ENCODE measurements at regions of chr22 and their contacts with region 1.

Region 1: GRCh38 chr22:43385770-43386641 is 25.8 kb upstream of the MPPED1 start:
- DNase-seq: peak in 1 of 2 donors; percentile 76
- H3K4me3 ChIP-seq: no peak overlapping the region
- H3K27ac ChIP-seq: no peak overlapping the region
- H3K4me1 ChIP-seq: no peaks in the 10 kb centered on the region
- H3K27me3 ChIP-seq: no peaks in the 10 kb centered on the region
- CTCF ChIP-seq: peak; percentile 72 to 92 (median 74)

Region 2: DNA sequence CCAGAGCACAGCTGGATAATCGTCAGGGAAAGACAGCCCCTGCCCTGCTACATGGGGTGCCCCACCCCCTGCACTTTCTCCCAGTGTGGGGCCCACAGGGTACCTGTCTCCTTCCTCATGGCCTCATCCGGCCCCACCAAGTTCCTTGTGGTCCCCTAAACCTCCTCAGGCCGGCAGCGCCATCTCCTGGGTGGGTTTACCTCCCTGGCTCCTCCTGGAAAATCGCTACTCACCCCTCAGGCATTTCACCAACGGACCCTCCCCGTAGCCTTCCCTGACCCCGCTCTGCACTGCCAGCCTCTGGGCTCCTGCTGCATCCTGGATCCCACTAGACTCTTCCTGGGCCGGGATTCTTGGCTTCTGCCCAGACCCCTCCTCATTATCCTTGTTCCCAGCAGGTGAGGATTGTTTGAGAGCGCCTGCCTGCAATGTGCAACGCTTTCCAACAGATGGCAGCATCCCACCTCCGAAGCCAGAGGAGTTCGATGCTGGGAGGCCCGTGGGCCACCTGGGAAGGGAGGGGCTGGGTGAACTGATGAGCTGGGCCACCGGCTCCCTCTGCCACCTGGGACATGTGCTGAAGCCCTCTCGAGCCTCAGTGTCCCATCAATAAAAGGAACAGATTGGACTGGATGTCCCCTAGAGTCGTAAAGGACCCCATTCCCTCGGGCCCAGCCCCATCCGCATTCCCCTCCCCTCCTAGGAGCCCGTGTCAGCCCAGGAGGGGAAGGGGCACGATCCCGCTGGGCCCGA is 154.9 kb before region 1 on chr22:
- intact Hi-C with region 1: loop called (anchors 1 kb)
- DNase-seq: no peak
- H3K4me3 ChIP-seq: no peak overlapping the region
- H3K27ac ChIP-seq: no peak overlapping the region
- H3K4me1 ChIP-seq: no peaks in the 10 kb centered on the region
- H3K27me3 ChIP-seq: peaks cover 5% of the 10 kb centered on the region
- CTCF ChIP-seq: peak; percentile 50 to 84 (median 83)

Region 3: DNA sequence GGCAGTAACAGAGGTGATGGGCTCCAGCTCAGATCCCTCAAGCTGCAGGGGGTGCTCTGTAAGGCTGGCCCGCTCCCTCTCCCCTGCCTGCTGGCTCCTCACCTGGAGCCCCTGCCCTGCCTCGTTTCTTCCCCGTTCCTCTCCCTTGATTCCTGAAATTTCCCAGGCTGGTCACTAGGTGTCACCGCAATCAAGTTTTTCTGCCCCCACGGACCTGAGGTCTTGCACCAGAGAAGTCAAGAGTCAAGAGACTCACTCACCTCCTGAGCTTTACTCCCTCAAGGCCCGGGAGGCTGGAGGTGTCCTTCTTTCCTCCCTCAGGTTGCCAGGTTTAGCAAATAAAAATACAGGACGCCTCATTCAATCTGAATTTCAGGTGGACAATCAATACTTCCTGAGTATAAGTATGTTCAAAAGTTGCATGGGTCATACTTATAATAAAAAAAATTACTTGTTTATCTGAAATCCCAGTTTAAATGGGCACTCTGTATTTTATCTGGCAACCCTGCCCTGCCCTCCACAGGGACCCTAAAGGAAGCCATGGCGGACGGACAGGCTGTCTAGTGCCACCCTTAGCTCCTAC is 112.0 kb before region 1 on chr22:
- intact Hi-C with region 1: loop called (anchors 1 kb)
- DNase-seq: no peak
- H3K4me3 ChIP-seq: no peak overlapping the region
- H3K27ac ChIP-seq: no peak overlapping the region
- H3K4me1 ChIP-seq: no peaks in the 10 kb centered on the region
- H3K27me3 ChIP-seq: no peaks in the 10 kb centered on the region
- CTCF ChIP-seq: peak; percentile 44 to 57 (median 55)

Region 4: DNA sequence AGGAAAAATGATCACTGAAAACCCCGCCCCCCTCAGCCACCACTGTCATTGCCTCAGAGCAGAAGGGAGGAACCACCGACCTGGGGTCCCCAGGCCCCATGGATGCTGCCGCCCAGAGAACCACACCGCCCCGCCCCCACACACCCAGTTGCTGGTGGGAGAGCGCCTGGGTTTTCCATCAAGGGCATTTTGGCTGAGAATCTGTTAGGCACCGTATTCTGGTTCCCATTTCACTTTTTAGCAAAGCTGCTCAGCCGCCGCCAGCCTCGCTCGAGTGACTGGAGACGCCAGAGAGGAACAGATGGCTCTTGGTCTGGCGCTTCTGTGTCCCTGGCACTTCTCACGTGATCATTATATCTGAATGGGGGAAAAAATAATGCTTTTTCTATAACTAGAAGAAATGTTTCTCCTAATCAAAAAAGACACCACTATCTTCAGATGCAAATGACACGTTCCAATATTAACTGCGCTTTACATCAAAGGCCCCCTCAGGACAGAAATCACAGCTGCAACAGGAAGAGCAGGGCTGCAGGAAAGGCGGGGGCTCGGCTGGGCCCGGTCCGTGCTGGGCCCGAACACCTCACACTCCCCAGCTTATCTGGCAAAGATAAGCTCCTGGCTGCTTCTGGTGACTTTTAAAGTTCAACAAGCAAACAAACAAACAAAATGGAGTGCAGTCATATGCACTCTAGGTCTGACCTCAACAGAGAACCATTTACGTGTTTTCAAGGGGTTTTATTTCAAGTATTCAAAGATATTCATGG is 175.6 kb after region 1 on chr22:
- intact Hi-C with region 1: no loop called
- DNase-seq: no peak
- H3K4me3 ChIP-seq: no peak overlapping the region
- H3K27ac ChIP-seq: no peak overlapping the region
- H3K4me1 ChIP-seq: no peaks in the 10 kb centered on the region
- H3K27me3 ChIP-seq: no peaks in the 10 kb centered on the region
- CTCF ChIP-seq: no peak

Region 5: GRCh38 chr22:43826142-43827002 is 440.4 kb after region 1 on chr22:
- intact Hi-C with region 1: loop called (anchors 2 kb)
- DNase-seq: peak in 1 of 2 donors; percentile 64
- H3K4me3 ChIP-seq: no peak overlapping the region
- H3K27ac ChIP-seq: peak overlapping the region in 1 of 2 donors; percentile 33
- H3K4me1 ChIP-seq: peaks cover 0 to 2% of the 10 kb centered on the region in 2 donors
- H3K27me3 ChIP-seq: no peaks in the 10 kb centered on the region
- CTCF ChIP-seq: peak in 2 of 3 experiments; percentile 28 to 44

Measured in ascending aorta (tissue), 2 donors.